HEK293 (cell line): ENCODE measurements at regions of chr19 and their contacts with region 1.

Region 1: GRCh38 chr19:13774217-13775191 is at the start of gene C19orf53:
- H3K4me3 ChIP-seq: peak within 1 kb of the TSS; percentile 73
- H3K27ac ChIP-seq: peak within 1 kb of the TSS; percentile 80
- H3K4me1 ChIP-seq: no peaks in the 10 kb centered on the region; the same call in 1 of the 2 replicates
- CTCF ChIP-seq: no peak

Region 2: GRCh38 chr19:13748169-13748828 is 26.2 kb before region 1 on chr19:
- CTCF ChIA-PET with region 1: interaction called, 3 read pairs
- POLR2A ChIA-PET with region 1: interaction called, 10 read pairs
- H3K4me3 ChIP-seq: peak overlapping the region; percentile 75
- H3K27ac ChIP-seq: peak overlapping the region; percentile 25; the same call in 1 of the 2 replicates
- H3K4me1 ChIP-seq: no peaks in the 10 kb centered on the region
- CTCF ChIP-seq: no peak

Region 3: GRCh38 chr19:13764101-13764807 is 10.2 kb before region 1 on chr19 and contains the start of gene MRI1:
- CTCF ChIA-PET with region 1: interaction called, 3 read pairs
- POLR2A ChIA-PET with region 1: interaction called, 30 read pairs
- H3K4me3 ChIP-seq: peak within 1 kb of the TSS; percentile 85
- H3K27ac ChIP-seq: peak within 1 kb of the TSS; percentile 35
- H3K4me1 ChIP-seq: no peaks in the 10 kb centered on the region
- CTCF ChIP-seq: no peak

Region 4: DNA sequence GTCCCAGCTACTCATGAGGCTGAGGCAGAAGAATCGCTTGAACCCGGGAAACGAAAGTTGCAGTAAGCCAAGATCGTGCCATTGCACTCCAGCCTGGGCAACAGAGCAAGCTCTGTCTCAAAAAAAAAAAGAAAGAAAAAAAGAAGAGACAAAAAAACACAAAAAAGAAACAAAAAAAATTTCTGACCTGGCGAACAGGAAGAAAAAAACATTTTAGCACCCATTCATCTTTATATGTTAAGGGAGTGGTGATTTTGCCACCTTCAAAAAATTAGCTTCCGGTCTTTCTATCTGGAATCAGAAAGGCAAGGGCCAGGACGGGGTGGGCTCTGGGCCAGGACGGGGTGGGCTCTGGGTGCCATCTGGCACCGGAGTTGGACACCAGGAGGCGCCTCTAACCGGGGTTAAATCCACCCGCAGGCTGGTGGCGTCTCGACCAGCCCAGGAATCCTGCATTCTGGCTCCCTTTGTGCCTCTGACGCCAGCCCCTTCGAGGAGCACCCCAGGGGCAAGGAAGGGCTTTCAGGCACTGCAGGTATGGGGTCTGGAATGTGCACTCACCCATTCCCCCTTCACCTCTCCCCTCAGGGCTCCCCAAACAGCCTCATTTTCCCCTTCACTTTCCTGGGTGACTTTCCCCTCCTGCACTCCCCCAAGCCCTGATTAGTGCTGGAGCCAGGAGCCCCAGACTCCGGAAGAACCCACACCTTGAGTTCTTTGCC is 10.4 kb after region 1 on chr19:
- CTCF ChIA-PET with region 1: interaction called, 7 read pairs
- POLR2A ChIA-PET with region 1: interaction called, 10 read pairs
- H3K4me3 ChIP-seq: no peak overlapping the region
- H3K27ac ChIP-seq: no peak overlapping the region
- H3K4me1 ChIP-seq: no peaks in the 10 kb centered on the region; the same call in 1 of the 2 replicates
- CTCF ChIP-seq: 0 out of 2 replicates have a peak, but pooled peaks have one; percentile 27

Region 5: DNA sequence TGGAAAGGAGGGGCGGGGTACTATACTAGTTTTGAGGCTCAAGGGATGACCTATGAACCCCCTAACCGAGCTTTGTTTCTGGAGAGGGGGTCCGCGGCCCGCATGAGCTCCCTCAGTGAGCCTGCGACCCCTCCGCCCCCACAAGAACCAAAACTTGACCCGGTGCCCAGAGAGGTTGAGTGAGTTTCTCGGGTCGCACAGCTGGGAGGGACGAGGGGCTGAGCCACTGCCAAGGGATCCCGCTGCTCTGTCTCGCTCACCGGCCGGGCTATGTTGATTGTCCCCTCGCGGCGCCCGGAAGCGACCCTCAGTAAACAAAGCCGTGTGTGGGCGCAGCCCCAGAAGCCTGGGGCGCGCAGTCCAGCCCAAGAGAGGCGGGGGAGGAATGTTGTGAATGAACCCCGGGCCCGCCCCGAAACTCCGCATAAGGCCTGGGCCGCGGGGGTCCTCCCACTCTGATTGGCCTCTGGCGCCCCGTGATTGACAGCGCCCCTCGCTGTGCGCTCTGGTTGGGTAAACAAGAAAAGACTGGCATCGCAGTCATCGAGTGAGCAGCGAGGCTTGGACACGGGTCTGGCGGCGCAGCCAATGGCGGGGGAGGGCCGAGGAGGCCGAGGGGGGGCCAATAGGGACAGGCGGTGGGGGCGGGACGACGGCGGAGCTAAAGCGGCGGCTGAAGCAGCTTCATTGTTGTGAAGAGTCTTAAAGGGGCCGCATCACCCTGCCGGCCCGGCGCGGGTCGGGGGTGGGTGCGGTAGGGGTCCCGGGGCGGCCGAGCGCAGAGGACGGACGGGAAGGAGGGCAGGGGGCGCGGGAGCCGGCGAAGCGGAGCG is 20.5 kb after region 1 on chr19 and contains the start of gene ZSWIM4:
- CTCF ChIA-PET with region 1: no interaction called
- POLR2A ChIA-PET with region 1: interaction called, 17 read pairs
- H3K4me3 ChIP-seq: peak within 1 kb of the TSS; percentile 79
- H3K27ac ChIP-seq: peak within 1 kb of the TSS; percentile 76
- H3K4me1 ChIP-seq: peaks cover 8% of the 10 kb centered on the region
- CTCF ChIP-seq: no peak

Region 6: GRCh38 chr19:13846557-13847406 is 72.3 kb after region 1 on chr19:
- CTCF ChIA-PET with region 1: interaction called, 3 read pairs
- POLR2A ChIA-PET with region 1: interaction called, 11 read pairs
- H3K4me3 ChIP-seq: peak overlapping the region; percentile 76
- H3K27ac ChIP-seq: peak overlapping the region; percentile 98
- H3K4me1 ChIP-seq: peaks cover 34% of the 10 kb centered on the region
- CTCF ChIP-seq: no peak